Gastrocnemius medialis (tissue), 4 donors: ENCODE measurements at regions of chr1 and their contacts with region 1.

Region 1: DNA sequence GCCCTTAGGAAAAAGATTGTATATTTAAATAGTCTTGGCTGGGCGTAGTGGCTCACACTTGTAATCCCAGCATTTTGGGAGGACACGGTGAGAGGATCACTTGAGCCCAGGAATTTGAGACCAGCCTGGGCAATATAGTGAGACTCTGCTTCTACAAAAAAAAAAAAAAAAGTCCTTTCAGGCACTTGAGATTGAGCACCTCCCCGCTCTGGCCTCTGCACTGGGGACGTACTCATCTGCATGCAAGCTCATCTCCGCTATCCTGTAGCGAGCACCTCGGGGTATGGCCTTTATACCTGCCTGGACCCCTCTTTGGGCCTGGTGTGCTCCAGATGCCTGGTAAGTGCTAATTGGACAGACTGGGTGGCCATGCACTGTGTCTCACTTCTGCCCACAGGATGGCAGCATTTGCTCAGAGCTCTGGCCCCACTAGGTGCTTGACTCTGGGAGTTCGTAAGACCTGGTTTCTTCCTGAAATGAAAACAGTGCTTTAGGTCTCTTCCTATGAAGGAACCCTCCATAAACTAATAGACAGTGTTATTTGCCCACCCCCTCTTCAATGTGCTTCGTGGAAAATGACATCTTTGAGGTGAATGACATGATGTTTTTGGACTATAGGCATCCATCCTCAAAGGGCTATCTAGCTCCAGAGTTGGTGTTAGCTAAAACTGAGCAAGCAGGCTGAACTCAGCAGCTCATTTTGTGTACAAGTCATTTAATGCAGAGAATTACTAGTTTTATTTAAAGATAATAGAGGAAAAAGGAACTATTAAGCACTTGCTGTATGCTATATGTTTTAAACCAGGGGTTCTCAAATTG is 61.7 kb upstream of the ADAR start:
- DNase-seq: peak; percentile 60 to 71
- ATAC-seq: peak; percentile 96 to 100
- H3K4me3 ChIP-seq: no peak overlapping the region
- H3K27ac ChIP-seq: no peak overlapping the region
- H3K4me1 ChIP-seq: no peaks in the 10 kb centered on the region
- H3K27me3 ChIP-seq: no peaks in the 10 kb centered on the region
- CTCF ChIP-seq: peak; percentile 80 to 91 (median 87)
- POLR2A ChIP-seq: no peak

Region 2: GRCh38 chr1:154741741-154742495 is 72.2 kb after region 1 on chr1:
- in situ Hi-C with region 1: no loop called
- intact Hi-C with region 1: loop called (anchors 2 kb)
- DNase-seq: peak in 1 of 2 donors; percentile 34
- ATAC-seq: peak; percentile 21 to 37
- H3K4me3 ChIP-seq: no peak overlapping the region
- H3K27ac ChIP-seq: peak overlapping the region; percentile 35 to 81 (median 72)
- H3K4me1 ChIP-seq: peaks cover 29 to 40% of the 10 kb centered on the region in 2 donors
- H3K27me3 ChIP-seq: no peaks in the 10 kb centered on the region
- CTCF ChIP-seq: peak; percentile 27 to 51 (median 33)
- POLR2A ChIP-seq: no peak

Region 3: GRCh38 chr1:154760469-154760933 is 90.8 kb after region 1 on chr1:
- in situ Hi-C with region 1: loop called in 1 of 4 experiments (anchors 25 kb)
- intact Hi-C with region 1: no loop called
- DNase-seq: no peak
- ATAC-seq: no peak
- H3K4me3 ChIP-seq: peak overlapping the region in 1 of 4 donors; percentile 24
- H3K27ac ChIP-seq: no peak overlapping the region
- H3K4me1 ChIP-seq: no peaks in the 10 kb centered on the region
- H3K27me3 ChIP-seq: no peaks in the 10 kb centered on the region
- CTCF ChIP-seq: peak in 4 of 5 experiments; percentile 46 to 50 (median 48)
- POLR2A ChIP-seq: no peak

Region 4: GRCh38 chr1:154878371-154879022 is 208.8 kb after region 1 on chr1:
- in situ Hi-C with region 1: loop called (anchors 5 kb)
- intact Hi-C with region 1: loop called (anchors 1 kb)
- DNase-seq: peak; percentile 65 to 79
- ATAC-seq: peak; percentile 80 to 84
- H3K4me3 ChIP-seq: no peak overlapping the region
- H3K27ac ChIP-seq: peak overlapping the region in 3 of 4 donors; percentile 29 to 69 (median 58)
- H3K4me1 ChIP-seq: peaks cover 3 to 4% of the 10 kb centered on the region in 2 donors
- H3K27me3 ChIP-seq: no peaks in the 10 kb centered on the region
- CTCF ChIP-seq: peak; percentile 82 to 96 (median 90)
- POLR2A ChIP-seq: no peak

Region 5: DNA sequence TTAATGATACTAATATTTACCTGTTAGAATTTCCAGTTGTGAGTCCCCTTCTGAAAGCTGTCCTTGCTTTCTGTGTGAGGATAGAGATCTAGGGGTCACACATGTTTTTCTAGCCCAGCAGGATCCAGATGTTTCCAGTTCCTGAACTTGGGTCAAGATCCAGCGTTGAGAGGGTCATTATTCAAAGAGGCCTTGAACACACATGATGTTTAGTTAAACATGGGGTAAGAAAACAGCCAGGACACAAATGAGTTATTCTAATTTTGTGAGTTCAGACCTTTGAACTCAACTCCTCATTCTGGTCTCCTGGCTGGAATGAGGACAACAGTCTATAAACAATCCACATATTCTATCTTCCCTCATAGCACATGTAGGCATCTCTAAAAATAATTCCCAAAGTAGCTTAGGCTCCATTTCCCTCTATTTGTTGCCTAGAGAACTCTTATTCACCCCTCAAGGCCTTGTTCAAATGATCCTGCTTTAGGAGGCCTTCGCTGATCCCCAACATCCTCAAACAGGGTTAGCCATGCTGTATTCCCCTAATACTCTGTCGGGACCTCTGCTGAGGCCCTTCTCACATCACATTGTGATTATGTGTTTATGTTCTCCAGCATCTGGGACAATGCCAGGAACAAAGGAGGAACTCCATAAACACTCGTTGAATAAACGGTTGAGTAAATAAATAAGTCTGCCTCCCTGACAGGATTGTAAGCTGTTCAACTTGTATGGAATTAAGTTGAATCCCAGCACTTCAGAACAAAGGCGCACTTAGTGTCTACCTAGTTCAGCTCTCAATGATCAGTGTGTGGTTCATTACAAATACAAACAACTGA is 215.4 kb after region 1 on chr1:
- in situ Hi-C with region 1: loop called (anchors 5 kb)
- intact Hi-C with region 1: no loop called
- DNase-seq: no peak
- ATAC-seq: no peak
- H3K4me3 ChIP-seq: no peak overlapping the region
- H3K27ac ChIP-seq: no peak overlapping the region
- H3K4me1 ChIP-seq: no peaks in the 10 kb centered on the region
- H3K27me3 ChIP-seq: no peaks in the 10 kb centered on the region
- CTCF ChIP-seq: no peak
- POLR2A ChIP-seq: no peak

Region 6: GRCh38 chr1:154912755-154913154 is 243.1 kb after region 1 on chr1:
- in situ Hi-C with region 1: no loop called
- intact Hi-C with region 1: no loop called
- DNase-seq: no peak
- ATAC-seq: no peak
- H3K4me3 ChIP-seq: no peak overlapping the region
- H3K27ac ChIP-seq: no peak overlapping the region
- H3K4me1 ChIP-seq: peaks cover 0 to 11% of the 10 kb centered on the region in 2 donors
- H3K27me3 ChIP-seq: no peaks in the 10 kb centered on the region
- CTCF ChIP-seq: no peak
- POLR2A ChIP-seq: no peak